ENCODE measurements at regions of chr14 and their contacts with region 1.

Region 1: DNA sequence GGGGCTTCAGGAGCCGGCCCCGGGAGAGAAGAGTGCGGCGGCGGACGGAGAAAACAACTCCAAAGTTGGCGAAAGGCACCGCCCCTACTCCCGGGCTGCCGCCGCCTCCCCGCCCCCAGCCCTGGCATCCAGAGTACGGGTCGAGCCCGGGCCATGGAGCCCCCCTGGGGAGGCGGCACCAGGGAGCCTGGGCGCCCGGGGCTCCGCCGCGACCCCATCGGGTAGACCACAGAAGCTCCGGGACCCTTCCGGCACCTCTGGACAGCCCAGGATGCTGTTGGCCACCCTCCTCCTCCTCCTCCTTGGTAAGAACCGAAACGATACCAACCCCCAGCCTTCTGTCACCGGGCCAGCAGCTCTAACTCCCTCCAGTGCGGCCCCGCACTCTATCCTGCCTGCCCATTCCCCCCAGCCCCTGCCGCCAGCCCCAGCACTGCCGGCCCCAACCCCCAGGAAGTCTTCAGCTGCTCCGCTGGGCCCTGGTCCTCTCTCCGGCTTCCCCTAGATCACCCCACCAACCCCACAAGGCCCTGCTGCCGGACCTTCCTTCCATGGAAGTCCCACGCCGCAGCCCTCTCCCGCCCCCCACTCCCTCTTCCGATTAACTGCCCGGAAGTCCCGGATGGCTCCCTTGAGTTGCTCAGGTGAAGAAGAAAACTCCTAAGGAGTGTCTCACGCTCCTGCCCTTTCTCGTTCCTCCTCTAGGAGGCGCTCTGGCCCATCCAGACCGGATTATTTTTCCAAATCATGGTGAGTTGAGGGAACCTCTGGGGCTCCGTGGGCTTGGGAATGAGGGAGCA is 693 bp downstream of the LRP10 start:
- DNase-seq: peak; percentile 87
- H3K4me3 Mint-ChIP-seq: peak overlapping the region; percentile 91
- H3K27ac Mint-ChIP-seq: peak overlapping the region; percentile 100
- H3K4me1 Mint-ChIP-seq: peaks cover 29% of the 10 kb centered on the region
- H3K27me3 Mint-ChIP-seq: no peaks in the 10 kb centered on the region

Region 2: GRCh38 chr14:22251090-22251489 is 621.1 kb before region 1 on chr14:
- CTCF ChIA-PET with region 1: no interaction called
- intact Hi-C with region 1: no loop called
- DNase-seq: no peak
- H3K4me3 Mint-ChIP-seq: no peak overlapping the region
- H3K27ac Mint-ChIP-seq: no peak overlapping the region
- H3K4me1 Mint-ChIP-seq: no peaks in the 10 kb centered on the region
- H3K27me3 Mint-ChIP-seq: no peaks in the 10 kb centered on the region

Region 3: DNA sequence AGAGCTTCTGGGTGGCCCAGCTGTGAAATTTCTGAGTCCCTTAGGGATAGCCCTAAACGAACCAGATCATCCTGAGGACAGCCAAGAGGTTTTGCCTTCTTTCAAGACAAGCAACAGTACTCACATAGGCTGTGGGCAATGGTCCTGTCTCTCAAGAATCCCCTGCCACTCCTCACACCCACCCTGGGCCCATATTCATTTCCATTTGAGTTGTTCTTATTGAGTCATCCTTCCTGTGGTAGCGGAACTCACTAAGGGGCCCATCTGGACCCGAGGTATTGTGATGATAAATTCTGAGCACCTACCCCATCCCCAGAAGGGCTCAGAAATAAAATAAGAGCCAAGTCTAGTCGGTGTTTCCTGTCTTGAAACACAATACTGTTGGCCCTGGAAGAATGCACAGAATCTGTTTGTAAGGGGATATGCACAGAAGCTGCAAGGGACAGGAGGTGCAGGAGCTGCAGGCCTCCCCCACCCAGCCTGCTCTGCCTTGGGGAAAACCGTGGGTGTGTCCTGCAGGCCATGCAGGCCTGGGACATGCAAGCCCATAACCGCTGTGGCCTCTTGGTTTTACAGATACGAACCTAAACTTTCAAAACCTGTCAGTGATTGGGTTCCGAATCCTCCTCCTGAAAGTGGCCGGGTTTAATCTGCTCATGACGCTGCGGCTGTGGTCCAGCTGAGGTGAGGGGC is 322.1 kb before region 1 on chr14:
- CTCF ChIA-PET with region 1: no interaction called
- intact Hi-C with region 1: no loop called
- DNase-seq: peak; percentile 89
- H3K4me3 Mint-ChIP-seq: peak overlapping the region; percentile 67
- H3K27ac Mint-ChIP-seq: peak overlapping the region; percentile 98
- H3K4me1 Mint-ChIP-seq: peaks cover 92% of the 10 kb centered on the region
- H3K27me3 Mint-ChIP-seq: no peaks in the 10 kb centered on the region

Region 4: DNA sequence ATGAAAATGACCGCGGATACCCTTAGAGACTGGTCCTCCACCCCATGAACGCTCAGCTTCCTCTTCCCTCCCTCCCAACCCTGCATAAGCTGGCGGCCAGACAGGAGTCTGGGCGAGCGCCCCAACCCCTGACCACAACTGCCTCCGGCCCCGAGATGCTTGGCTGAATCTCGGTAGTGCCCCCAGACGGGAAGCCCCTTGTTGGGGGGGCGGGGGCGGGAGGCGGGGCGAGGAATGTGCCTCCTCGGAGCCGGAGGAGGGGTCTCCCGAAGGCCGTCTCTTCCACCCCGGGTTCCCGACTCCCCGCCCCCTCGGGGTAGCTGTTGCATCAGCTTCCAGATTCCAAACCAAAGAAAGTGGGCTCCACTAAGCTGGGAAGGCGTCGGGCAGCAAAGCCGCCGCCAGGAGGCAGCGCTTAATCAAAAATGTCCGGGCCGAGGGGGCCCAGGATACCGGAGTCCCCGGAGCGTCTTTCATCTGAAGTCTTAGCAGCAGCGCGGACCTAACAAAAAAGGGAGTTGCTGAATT is 49.6 kb before region 1 on chr14:
- CTCF ChIA-PET with region 1: interaction called, 13 read pairs
- intact Hi-C with region 1: no loop called
- DNase-seq: peak; percentile 75
- H3K4me3 Mint-ChIP-seq: peak overlapping the region; percentile 61
- H3K27ac Mint-ChIP-seq: no peak overlapping the region
- H3K4me1 Mint-ChIP-seq: peaks cover 31% of the 10 kb centered on the region
- H3K27me3 Mint-ChIP-seq: peaks cover 1% of the 10 kb centered on the region

Region 5: DNA sequence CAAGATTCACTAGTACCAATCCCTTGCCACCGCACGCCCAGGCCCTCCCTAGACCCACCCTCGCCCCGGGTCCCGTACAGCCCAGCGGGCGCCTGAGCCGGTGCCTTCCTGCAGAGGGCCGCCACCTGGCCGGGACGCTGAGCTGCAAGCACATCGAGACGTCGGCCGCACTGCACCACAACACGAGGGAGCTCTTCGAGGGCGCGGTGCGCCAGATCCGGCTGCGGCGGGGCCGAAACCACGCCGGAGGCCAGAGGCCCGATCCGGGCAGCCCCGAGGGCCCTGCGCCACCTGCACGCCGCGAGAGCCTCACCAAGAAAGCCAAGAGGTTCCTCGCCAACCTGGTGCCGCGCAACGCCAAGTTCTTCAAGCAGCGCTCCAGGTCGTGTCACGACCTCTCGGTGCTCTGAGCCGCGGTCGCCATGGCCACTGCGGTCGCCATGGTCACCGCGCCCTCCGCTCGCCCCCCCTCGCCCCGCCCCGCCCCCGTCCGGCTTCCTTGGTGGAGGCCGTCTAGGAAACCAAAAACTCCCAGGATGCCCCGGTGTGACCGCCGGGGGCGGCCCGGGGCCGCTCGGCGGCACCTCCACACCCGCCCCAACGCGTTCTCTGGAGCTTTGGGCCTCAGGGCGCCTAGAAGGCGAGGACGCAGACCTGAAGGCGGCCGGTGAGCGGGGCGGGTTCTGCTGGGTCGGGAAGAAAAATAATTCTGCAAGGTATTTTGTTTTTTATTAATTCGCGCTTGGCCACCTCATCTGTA is 14.4 kb after region 1 on chr14:
- CTCF ChIA-PET with region 1: interaction called, 125 read pairs
- intact Hi-C with region 1: loop called (anchors 1 kb)
- DNase-seq: peak; percentile 87
- H3K4me3 Mint-ChIP-seq: peak overlapping the region; percentile 83
- H3K27ac Mint-ChIP-seq: peak overlapping the region; percentile 84
- H3K4me1 Mint-ChIP-seq: peaks cover 50% of the 10 kb centered on the region
- H3K27me3 Mint-ChIP-seq: peaks cover 2% of the 10 kb centered on the region

Region 6: GRCh38 chr14:22918804-22919600 is 46.8 kb after region 1 on chr14 and contains the start of gene RBM23:
- CTCF ChIA-PET with region 1: interaction called, 17 read pairs
- intact Hi-C with region 1: loop called (anchors 1 kb)
- DNase-seq: peak; percentile 100
- H3K4me3 Mint-ChIP-seq: peak within 1 kb of the TSS; percentile 94
- H3K27ac Mint-ChIP-seq: peak within 1 kb of the TSS; percentile 99
- H3K4me1 Mint-ChIP-seq: peaks cover 42% of the 10 kb centered on the region
- H3K27me3 Mint-ChIP-seq: peaks cover 3% of the 10 kb centered on the region
- total RNA-seq, gene RBM23: 53.5 to 61.2 TPM

Region 7: DNA sequence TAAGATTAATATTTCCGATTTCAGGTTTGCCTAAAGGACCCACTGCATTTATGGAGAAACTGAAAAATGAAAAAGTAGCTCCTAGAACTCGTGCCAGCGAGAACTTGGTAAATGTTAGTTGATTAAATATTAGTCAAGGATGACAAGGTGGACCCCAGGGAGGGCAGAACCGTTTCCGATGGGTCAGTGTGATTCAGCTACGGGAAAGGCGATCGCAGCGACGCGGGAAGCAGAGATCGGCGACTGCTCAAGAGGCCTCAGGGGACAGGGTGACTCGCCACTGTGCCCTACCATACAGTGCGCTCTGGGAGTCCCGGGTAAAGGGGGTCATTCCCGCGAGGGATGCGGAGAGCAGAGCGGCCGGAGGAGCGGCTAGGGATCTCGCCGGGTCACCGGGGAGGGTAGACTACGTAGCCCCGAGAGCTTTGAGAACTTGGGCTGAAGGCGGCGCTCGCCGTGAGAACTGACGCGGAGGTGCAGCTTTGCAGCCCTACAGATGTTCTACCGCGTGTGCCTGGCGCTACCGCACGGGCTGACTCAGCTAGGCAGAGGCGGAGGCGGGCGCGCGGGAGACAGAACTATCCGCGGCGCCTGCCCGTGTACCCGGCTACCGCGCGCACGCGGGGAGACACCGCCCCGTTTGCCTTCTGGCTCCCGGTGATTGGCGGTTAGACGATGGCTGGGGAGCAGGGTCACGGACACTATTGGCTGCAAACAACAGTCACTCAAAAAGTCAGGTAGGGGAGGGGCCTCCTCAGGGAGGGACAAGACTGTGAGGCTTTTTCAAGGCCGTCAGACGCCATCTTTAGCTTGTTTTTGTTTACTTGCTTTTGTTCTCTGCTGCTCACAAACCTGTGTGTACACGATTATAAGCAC is 134.5 kb after region 1 on chr14:
- CTCF ChIA-PET with region 1: interaction called, 3 read pairs
- intact Hi-C with region 1: loop called (anchors 1 kb)
- DNase-seq: peak; percentile 99
- H3K4me3 Mint-ChIP-seq: peak overlapping the region; percentile 96
- H3K27ac Mint-ChIP-seq: peak overlapping the region; percentile 98
- H3K4me1 Mint-ChIP-seq: peaks cover 36% of the 10 kb centered on the region
- H3K27me3 Mint-ChIP-seq: no peaks in the 10 kb centered on the region

Measured in activated naive CD4-positive, alpha-beta T cell treated with anti-CD3 and anti-CD28 coated beads for 36 hours (primary cell).